H1 (cell line): ENCODE measurements at regions of chr5 and their contacts with region 1.

Region 1: DNA sequence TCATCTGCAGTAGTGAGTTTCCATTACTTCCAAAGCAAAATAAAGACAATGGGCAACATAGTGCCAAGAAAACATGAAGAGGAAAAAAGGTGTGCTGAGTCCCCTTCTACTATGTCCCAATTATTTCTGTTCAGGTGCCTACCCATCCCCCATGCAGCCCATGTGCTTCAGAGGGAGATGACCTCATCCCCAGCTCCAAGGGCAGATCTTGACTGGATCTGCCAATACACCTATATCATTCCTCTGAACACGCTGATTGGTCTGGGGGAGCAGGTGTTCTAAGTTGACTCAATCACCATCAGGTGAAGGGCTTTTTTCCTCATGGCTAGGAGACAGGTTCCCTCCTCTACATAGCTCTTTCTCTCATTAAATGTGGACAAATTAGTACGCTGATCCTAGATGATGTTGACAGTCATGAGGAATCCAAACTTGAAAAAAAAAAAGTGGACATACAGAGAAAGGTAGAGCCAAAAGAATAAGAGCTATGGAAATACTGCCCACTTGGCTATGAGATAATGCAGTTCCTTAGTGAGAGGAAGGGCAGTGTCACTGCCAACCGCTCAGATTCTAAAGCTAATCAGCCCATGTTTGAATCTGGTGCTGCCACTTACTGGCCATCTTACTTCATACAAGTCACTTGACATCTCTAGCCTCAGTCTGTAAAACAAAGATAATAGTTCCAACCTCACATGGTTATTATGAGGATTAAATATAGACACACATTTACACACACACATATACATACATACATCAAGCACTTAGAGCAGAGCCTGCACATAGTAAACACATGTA is 23.1 kb downstream of the PRELID2 start:
- DNase-seq: no peak
- H3K4me3 ChIP-seq: no peak overlapping the region
- H3K27ac ChIP-seq: no peak overlapping the region
- H3K4me1 ChIP-seq: no peaks in the 10 kb centered on the region
- H3K27me3 ChIP-seq: no peaks in the 10 kb centered on the region
- CTCF ChIP-seq: peak in 2 of 3 experiments; percentile 47 to 48; a peak in 3 of 4 replicates
- EP300 ChIP-seq: no peak
- POLR2A ChIP-seq: no peak
- RAD21 ChIP-seq: peak; percentile 73 to 79

Region 2: DNA sequence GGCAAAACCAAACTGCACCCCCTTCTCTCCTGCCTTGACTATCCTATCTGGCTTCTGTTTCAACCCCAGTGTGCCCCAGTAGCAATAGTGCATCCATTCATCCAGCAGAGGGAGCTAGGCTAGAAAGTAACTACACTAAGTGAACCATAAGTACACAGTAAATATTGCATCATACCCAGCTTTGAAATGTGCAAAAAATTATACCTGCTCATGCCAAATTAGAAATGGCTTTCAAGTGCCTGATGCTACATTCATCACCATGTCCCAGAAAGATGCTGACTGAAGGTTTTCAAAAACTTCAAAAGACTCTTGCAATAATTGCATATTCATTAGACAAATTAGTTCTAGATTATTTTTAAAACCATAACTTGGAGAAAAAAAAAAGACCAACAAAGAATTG is 130.3 kb before region 1 on chr5:
- CTCF ChIA-PET with region 1: interaction called, 15 read pairs
- POLR2A ChIA-PET with region 1: no interaction called
- DNase-seq: peak in 1 of 2 experiments; percentile 54
- H3K4me3 ChIP-seq: no peak overlapping the region
- H3K27ac ChIP-seq: no peak overlapping the region
- H3K4me1 ChIP-seq: no peaks in the 10 kb centered on the region
- H3K27me3 ChIP-seq: no peaks in the 10 kb centered on the region
- CTCF ChIP-seq: peak; percentile 33 to 87 (median 72)
- EP300 ChIP-seq: no peak
- POLR2A ChIP-seq: no peak
- RAD21 ChIP-seq: peak; percentile 61 to 71

Region 3: DNA sequence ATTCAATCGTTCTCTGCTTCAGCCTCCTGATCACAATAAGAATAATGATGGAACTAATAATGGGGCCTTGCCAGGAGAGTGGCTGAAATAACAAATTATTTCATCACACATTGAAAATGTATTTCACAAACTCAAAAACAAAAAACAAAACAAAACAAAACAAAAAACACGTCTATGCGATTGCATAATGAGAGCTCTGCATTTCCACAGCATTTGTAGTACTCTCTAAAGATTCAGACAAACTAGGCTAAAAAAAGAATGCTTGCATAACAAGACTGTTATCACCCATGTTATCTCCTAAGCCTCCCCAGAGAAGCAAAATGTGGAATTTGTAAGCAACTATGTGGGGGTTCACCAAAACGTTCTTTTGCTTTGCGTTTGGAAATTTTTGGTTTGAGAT is 25.0 kb before region 1 on chr5:
- CTCF ChIA-PET with region 1: interaction called, 10 read pairs
- POLR2A ChIA-PET with region 1: no interaction called
- DNase-seq: no peak
- H3K4me3 ChIP-seq: no peak overlapping the region
- H3K27ac ChIP-seq: no peak overlapping the region
- H3K4me1 ChIP-seq: no peaks in the 10 kb centered on the region; a peak in 1 of 7 replicates
- H3K27me3 ChIP-seq: no peaks in the 10 kb centered on the region
- CTCF ChIP-seq: no peak
- EP300 ChIP-seq: no peak
- POLR2A ChIP-seq: no peak
- RAD21 ChIP-seq: no peak

Region 4: GRCh38 chr5:145825751-145826180 is 13.7 kb after region 1 on chr5:
- CTCF ChIA-PET with region 1: interaction called, 72 read pairs
- POLR2A ChIA-PET with region 1: no interaction called
- DNase-seq: no peak
- H3K4me3 ChIP-seq: no peak overlapping the region
- H3K27ac ChIP-seq: no peak overlapping the region
- H3K4me1 ChIP-seq: no peaks in the 10 kb centered on the region
- H3K27me3 ChIP-seq: no peaks in the 10 kb centered on the region; a peak in 1 of 7 replicates
- CTCF ChIP-seq: peak in 2 of 3 experiments; percentile 65 to 89; a peak in 3 of 4 replicates
- EP300 ChIP-seq: no peak
- POLR2A ChIP-seq: no peak
- RAD21 ChIP-seq: peak; percentile 67 to 72